ENCODE measurements at regions of chr15 and their contacts with region 1.

Region 1: DNA sequence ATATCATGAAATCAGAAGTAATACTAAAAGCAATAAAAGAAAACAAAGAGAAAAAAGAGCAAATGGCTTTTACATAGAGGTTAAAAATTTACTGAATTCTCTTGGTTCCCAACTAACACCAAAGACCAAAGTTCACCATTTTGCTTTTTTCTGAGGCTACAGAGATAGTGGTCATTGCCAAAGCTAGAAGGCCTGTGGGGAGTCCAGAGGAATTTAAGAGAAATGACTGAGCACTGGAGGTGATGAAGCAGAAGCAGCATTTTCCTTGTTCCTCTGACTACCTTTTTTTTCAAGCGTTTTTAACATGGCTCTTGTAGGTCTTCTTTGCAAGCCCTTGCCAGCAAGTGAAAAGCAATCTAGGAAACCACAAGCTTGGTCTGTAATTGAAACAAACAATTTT is 58.2 kb downstream of the THBS1 start:
- DNase-seq: no peak
- ATAC-seq: no peak
- H3K4me3 ChIP-seq: no peak overlapping the region
- H3K27ac ChIP-seq: no peak overlapping the region
- H3K4me1 ChIP-seq: peaks cover 0 to 12% (median 8%) of the 10 kb centered on the region in 9 donors
- H3K27me3 ChIP-seq: no peaks in the 10 kb centered on the region
- CTCF ChIP-seq: no peak

Region 2: DNA sequence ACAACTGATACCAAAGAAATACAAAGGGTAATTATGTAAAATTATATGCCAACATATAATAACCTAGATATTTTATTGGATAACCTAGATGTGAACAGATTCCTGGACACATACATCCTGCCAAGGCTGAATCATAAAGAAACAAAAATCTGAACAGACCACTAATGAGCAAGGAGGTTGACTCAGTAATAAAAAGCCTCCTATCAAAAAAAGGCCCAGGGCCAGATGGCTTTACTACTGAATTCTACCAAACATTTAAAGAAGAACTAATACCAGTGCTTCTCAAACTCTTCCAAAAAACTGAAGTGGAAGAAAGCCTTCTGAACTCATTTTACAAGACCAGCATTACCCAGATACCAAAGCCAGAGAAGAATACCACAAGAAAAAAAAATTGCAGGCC is 25.8 kb before region 1 on chr15:
- intact Hi-C with region 1: no loop called
- DNase-seq: no peak
- ATAC-seq: no peak
- H3K4me3 ChIP-seq: no peak overlapping the region
- H3K27ac ChIP-seq: no peak overlapping the region
- H3K4me1 ChIP-seq: peaks cover 0 to 4% (median 0%) of the 10 kb centered on the region in 9 donors
- H3K27me3 ChIP-seq: no peaks in the 10 kb centered on the region
- CTCF ChIP-seq: no peak

Region 3: GRCh38 chr15:39649757-39650156 is 10.7 kb after region 1 on chr15:
- intact Hi-C with region 1: loop called in 1 of 10 experiments (anchors 1 kb)
- DNase-seq: no peak
- ATAC-seq: peak; percentile 46 to 88 (median 64)
- H3K4me3 ChIP-seq: no peak overlapping the region
- H3K27ac ChIP-seq: peak overlapping the region in 5 of 10 donors; percentile 11 to 33 (median 24)
- H3K4me1 ChIP-seq: peaks cover 0 to 22% (median 9%) of the 10 kb centered on the region in 9 donors
- H3K27me3 ChIP-seq: no peaks in the 10 kb centered on the region
- CTCF ChIP-seq: no peak

Region 4: GRCh38 chr15:40192942-40193341 is 553.9 kb after region 1 on chr15:
- intact Hi-C with region 1: no loop called
- DNase-seq: no peak
- ATAC-seq: no peak
- H3K4me3 ChIP-seq: no peak overlapping the region
- H3K27ac ChIP-seq: no peak overlapping the region
- H3K4me1 ChIP-seq: no peaks in the 10 kb centered on the region
- H3K27me3 ChIP-seq: no peaks in the 10 kb centered on the region
- CTCF ChIP-seq: no peak